CD8-positive, alpha-beta T cell (primary cell): ENCODE measurements at regions of chrX and their contacts with region 1.

Region 1: DNA sequence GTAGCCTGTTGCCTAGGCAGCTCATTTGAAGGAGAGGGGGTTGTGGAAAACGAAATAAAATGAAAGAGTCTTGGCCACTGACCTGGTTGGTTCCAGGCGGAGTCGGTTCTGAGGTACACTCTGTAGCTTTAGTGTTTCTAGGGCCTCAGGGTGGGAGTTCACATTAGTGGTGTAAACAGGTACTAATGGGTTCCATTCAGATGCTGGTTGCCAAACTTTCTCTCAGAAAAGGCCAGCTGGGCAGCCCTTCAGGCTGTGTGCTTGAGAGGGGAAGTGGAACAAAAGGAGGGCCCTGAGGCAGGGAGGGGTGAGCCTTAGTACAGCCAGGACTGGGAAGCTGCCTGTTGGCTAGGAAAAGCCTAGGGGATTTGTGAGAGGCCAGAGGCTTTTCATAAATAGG is 24.8 kb downstream of the NHSL2 start:
- DNase-seq: no peak
- ATAC-seq: no peak
- H3K4me3 ChIP-seq: no peak overlapping the region
- H3K4me3 Mint-ChIP-seq: no peak overlapping the region
- H3K27ac ChIP-seq: no peak overlapping the region
- H3K27ac Mint-ChIP-seq: no peak overlapping the region
- H3K4me1 ChIP-seq: no peaks in the 10 kb centered on the region
- H3K4me1 Mint-ChIP-seq: no peaks in the 10 kb centered on the region
- H3K27me3 ChIP-seq: no peaks in the 10 kb centered on the region
- H3K27me3 Mint-ChIP-seq: peaks cover 18% of the 10 kb centered on the region
- CTCF ChIP-seq: no peak

Region 2: GRCh38 chrX:71919407-71919806 is 16.1 kb before region 1 on chrX:
- CTCF ChIA-PET with region 1: no interaction called
- POLR2A ChIA-PET with region 1: no interaction called
- intact Hi-C with region 1: loop called in 1 of 2 experiments (anchors 1 kb)
- DNase-seq: no peak
- ATAC-seq: no peak
- H3K4me3 ChIP-seq: no peak overlapping the region
- H3K4me3 Mint-ChIP-seq: no peak overlapping the region
- H3K27ac ChIP-seq: no peak overlapping the region
- H3K27ac Mint-ChIP-seq: no peak overlapping the region
- H3K4me1 ChIP-seq: no peaks in the 10 kb centered on the region
- H3K4me1 Mint-ChIP-seq: no peaks in the 10 kb centered on the region
- H3K27me3 ChIP-seq: no peaks in the 10 kb centered on the region
- H3K27me3 Mint-ChIP-seq: peaks cover 5% of the 10 kb centered on the region
- CTCF ChIP-seq: no peak